Activated naive CD8-positive, alpha-beta T cell treated with anti-CD3 and anti-CD28 coated beads, Interleukin-2, amount 10 ng/mL, durations not matched to agents 7 days and 5 days (primary cell): ENCODE measurements at regions of chr17 and their contacts with region 1.

Region 1: GRCh38 chr17:64661976-64662773 is at the start of gene SMURF2:
- DNase-seq: peak; percentile 86
- ATAC-seq: peak; percentile 86
- H3K4me3 Mint-ChIP-seq: peak within 1 kb of the TSS; percentile 96
- H3K27ac Mint-ChIP-seq: peak within 1 kb of the TSS; percentile 97
- H3K4me1 Mint-ChIP-seq: peaks cover 22% of the 10 kb centered on the region
- H3K27me3 Mint-ChIP-seq: no peaks in the 10 kb centered on the region
- total RNA-seq, gene SMURF2: 24.9 to 27.0 TPM

Region 2: GRCh38 chr17:64496786-64497564 is 165.2 kb before region 1 on chr17 and contains the start of gene POLG2:
- POLR2A ChIA-PET with region 1: no interaction called
- DNase-seq: peak; percentile 98
- ATAC-seq: peak; percentile 86
- H3K4me3 Mint-ChIP-seq: peak within 1 kb of the TSS; percentile 100
- H3K27ac Mint-ChIP-seq: peak within 1 kb of the TSS; percentile 100
- H3K4me1 Mint-ChIP-seq: peaks cover 69% of the 10 kb centered on the region
- H3K27me3 Mint-ChIP-seq: no peaks in the 10 kb centered on the region
- total RNA-seq, gene POLG2: 36.4 to 42.9 TPM

Region 3: GRCh38 chr17:64639516-64639915 is 22.7 kb before region 1 on chr17:
- POLR2A ChIA-PET with region 1: no interaction called
- DNase-seq: no peak
- ATAC-seq: no peak
- H3K4me3 Mint-ChIP-seq: no peak overlapping the region
- H3K27ac Mint-ChIP-seq: no peak overlapping the region
- H3K4me1 Mint-ChIP-seq: peaks cover 18% of the 10 kb centered on the region
- H3K27me3 Mint-ChIP-seq: no peaks in the 10 kb centered on the region

Region 4: DNA sequence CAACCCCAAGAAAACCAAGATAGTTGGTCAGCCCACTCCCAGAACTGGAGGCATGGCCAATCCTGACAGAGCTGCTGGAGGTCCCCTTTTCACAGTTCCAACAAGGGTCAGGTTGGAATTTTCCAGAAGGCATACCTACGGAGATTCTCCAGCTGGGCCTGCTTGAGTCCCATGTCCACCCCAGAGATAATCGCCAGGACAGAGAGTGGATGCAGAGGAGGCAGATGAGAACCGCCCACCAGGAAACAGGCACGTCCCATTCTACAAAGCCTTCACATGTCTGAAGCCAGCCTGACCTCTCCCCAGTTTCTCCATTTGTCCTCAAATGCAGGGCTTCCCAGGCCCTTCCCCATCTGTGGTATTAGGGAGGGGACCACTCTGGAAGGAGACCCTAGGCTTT is 47.3 kb after region 1 on chr17:
- POLR2A ChIA-PET with region 1: interaction called, 10 read pairs
- DNase-seq: no peak
- ATAC-seq: no peak
- H3K4me3 Mint-ChIP-seq: peak overlapping the region; percentile 65
- H3K27ac Mint-ChIP-seq: peak overlapping the region; percentile 78
- H3K4me1 Mint-ChIP-seq: peaks cover 68% of the 10 kb centered on the region
- H3K27me3 Mint-ChIP-seq: no peaks in the 10 kb centered on the region